ENCODE measurements at regions of chr1 and their contacts with region 1.

Region 1: DNA sequence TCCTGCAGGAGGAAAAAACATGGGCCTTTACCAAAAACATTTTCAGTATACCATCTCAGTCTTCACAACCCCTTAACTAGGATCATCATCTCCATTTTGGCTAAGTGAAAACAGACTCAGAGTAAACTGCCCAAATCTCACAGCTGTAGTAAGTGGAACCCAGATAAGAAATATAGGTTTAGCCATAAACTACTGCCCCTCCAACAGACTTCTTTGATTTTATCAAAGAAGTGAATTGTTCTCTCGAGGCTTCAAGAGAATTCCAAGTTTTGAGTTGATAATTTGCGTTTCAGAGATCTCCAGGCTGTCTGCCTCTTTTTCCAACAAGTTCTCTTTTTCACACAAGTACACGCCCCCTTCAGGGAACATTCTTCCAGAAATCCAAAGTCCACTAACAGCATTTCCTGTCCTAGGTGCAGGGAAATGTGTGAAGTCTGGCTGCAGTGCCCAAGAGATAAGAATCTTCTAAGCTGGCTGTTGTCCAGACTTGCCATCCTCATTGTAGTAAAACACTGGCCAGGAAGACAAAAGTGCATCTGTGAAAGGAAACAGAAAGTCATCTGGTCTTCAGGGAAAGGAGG is 30.8 kb downstream of the RNF19B start:
- DNase-seq: no peak
- H3K4me3 ChIP-seq: no peak overlapping the region
- H3K27ac ChIP-seq: no peak overlapping the region
- H3K4me1 ChIP-seq: peaks cover 5% of the 10 kb centered on the region
- CTCF ChIP-seq: no peak; the same call in 1 of the 2 replicates

Region 2: GRCh38 chr1:32773018-32773763 is 160.6 kb before region 1 on chr1:
- CTCF ChIA-PET with region 1: no interaction called
- POLR2A ChIA-PET with region 1: no interaction called
- intact Hi-C with region 1: no loop called
- DNase-seq: peak; percentile 75
- H3K4me3 ChIP-seq: no peak overlapping the region
- H3K27ac ChIP-seq: peak overlapping the region; percentile 15
- H3K4me1 ChIP-seq: no peaks in the 10 kb centered on the region
- CTCF ChIP-seq: peak; percentile 99

Region 3: GRCh38 chr1:33007190-33008050 is 73.6 kb after region 1 on chr1:
- CTCF ChIA-PET with region 1: no interaction called
- POLR2A ChIA-PET with region 1: no interaction called
- intact Hi-C with region 1: loop called (anchors 2 kb)
- DNase-seq: peak; percentile 18
- H3K4me3 ChIP-seq: no peak overlapping the region
- H3K27ac ChIP-seq: no peak overlapping the region
- H3K4me1 ChIP-seq: no peaks in the 10 kb centered on the region
- CTCF ChIP-seq: peak; percentile 57

Region 4: DNA sequence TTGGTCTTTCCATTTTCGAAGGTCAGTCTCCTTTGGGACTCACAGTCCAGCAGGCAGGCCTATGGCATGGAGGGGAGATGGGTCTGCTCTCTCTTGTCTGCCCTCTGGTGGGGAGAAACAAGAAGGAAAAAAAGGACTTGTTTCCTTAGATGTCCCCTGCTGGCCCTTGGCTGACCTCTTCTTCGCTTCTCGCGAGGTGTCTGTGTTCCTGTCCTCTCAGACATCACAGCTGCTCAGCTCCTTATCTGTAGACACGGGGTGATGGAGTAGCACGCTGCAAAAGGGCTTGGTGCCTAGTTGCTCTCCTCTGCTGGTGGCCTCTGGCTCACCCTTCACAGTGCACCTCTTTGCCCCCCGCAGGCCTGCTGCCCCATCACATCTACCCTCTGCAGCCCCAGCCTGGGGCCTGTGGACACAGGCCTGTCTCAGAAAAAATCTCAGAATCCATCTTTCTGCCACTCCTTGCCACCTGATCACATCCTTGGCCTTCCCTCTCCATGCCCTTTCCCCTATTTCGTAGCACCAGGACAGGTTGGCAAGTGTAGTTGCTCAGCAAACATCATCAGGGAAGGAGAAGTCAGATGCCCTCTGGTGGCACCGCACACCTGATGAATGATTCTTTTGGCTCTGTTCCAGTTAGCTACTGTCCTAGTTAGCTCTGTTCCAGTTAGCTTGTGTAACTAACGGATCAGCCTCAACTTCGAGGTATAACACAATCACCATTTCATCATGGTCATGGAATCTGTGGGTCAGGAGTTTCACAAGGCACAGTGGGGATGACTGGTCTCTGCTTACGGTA is 121.6 kb after region 1 on chr1:
- CTCF ChIA-PET with region 1: no interaction called
- POLR2A ChIA-PET with region 1: no interaction called
- intact Hi-C with region 1: loop called (anchors 1 kb)
- DNase-seq: peak; percentile 60
- H3K4me3 ChIP-seq: no peak overlapping the region
- H3K27ac ChIP-seq: no peak overlapping the region
- H3K4me1 ChIP-seq: no peaks in the 10 kb centered on the region
- CTCF ChIP-seq: peak; percentile 81

Region 5: GRCh38 chr1:33086384-33086850 is 152.6 kb after region 1 on chr1:
- CTCF ChIA-PET with region 1: no interaction called
- POLR2A ChIA-PET with region 1: interaction called, 3 read pairs
- intact Hi-C with region 1: loop called (anchors 1 kb)
- DNase-seq: peak; percentile 72
- H3K4me3 ChIP-seq: no peak overlapping the region
- H3K27ac ChIP-seq: no peak overlapping the region
- H3K4me1 ChIP-seq: peaks cover 19% of the 10 kb centered on the region
- CTCF ChIP-seq: peak; percentile 84

Region 6: DNA sequence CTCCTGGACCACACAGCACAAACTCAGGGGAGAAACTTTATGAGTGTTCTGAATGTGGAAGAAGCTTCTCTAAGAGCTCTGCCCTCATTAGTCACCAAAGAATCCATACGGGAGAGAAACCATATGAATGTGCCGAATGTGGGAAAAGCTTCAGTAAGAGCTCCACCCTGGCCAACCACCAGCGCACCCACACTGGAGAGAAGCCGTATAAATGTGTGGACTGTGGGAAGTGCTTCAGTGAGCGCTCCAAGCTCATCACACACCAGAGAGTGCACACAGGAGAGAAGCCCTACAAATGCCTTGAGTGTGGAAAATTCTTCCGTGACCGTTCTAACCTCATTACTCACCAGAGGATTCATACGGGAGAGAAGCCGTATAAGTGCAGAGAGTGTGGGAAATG is 561.1 kb after region 1 on chr1:
- CTCF ChIA-PET with region 1: no interaction called
- POLR2A ChIA-PET with region 1: no interaction called
- intact Hi-C with region 1: no loop called
- DNase-seq: no peak
- H3K4me3 ChIP-seq: no peak overlapping the region
- H3K27ac ChIP-seq: no peak overlapping the region
- H3K4me1 ChIP-seq: no peaks in the 10 kb centered on the region
- CTCF ChIP-seq: no peak

Measured in OCI-LY7 (cell line).